Calu3 (cell line): ENCODE measurements at regions of chr17 and their contacts with region 1.

Region 1: GRCh38 chr17:12222392-12222791 is 201.7 kb downstream of the MAP2K4 start:
- DNase-seq: no peak
- H3K4me3 Mint-ChIP-seq: no peak overlapping the region
- H3K27ac Mint-ChIP-seq: no peak overlapping the region
- H3K4me1 Mint-ChIP-seq: no peaks in the 10 kb centered on the region
- H3K27me3 Mint-ChIP-seq: no peaks in the 10 kb centered on the region
- CTCF ChIP-seq: no peak

Region 2: GRCh38 chr17:12261354-12261753 is 39.0 kb after region 1 on chr17:
- CTCF ChIA-PET with region 1: no interaction called
- intact Hi-C with region 1: no loop called
- DNase-seq: no peak
- H3K4me3 Mint-ChIP-seq: no peak overlapping the region
- H3K27ac Mint-ChIP-seq: no peak overlapping the region
- H3K4me1 Mint-ChIP-seq: no peaks in the 10 kb centered on the region
- H3K27me3 Mint-ChIP-seq: no peaks in the 10 kb centered on the region
- CTCF ChIP-seq: no peak

Region 3: DNA sequence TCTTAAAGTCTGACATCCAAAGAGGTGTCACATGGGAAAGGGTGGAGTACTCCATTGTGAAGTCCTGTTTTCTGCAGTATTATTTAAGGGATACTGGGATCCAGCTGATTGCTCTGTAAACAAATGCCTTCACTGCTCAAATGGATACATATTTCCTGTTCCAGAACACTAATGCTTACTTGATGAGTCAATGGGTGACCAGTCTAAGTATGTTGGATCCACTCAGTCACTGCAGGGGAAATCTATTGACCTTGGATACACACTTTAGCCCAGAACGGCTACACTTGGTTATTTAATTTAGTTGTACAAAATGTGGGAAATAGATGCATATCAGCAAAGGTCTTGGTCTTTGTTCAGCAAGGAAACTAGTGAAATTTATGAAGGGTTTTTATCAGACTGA is 59.7 kb after region 1 on chr17:
- CTCF ChIA-PET with region 1: interaction called, 11 read pairs
- intact Hi-C with region 1: no loop called
- DNase-seq: no peak
- H3K4me3 Mint-ChIP-seq: no peak overlapping the region
- H3K27ac Mint-ChIP-seq: no peak overlapping the region
- H3K4me1 Mint-ChIP-seq: no peaks in the 10 kb centered on the region
- H3K27me3 Mint-ChIP-seq: no peaks in the 10 kb centered on the region
- CTCF ChIP-seq: no peak